ENCODE measurements at regions of chr15 and their contacts with region 1.

Region 1: DNA sequence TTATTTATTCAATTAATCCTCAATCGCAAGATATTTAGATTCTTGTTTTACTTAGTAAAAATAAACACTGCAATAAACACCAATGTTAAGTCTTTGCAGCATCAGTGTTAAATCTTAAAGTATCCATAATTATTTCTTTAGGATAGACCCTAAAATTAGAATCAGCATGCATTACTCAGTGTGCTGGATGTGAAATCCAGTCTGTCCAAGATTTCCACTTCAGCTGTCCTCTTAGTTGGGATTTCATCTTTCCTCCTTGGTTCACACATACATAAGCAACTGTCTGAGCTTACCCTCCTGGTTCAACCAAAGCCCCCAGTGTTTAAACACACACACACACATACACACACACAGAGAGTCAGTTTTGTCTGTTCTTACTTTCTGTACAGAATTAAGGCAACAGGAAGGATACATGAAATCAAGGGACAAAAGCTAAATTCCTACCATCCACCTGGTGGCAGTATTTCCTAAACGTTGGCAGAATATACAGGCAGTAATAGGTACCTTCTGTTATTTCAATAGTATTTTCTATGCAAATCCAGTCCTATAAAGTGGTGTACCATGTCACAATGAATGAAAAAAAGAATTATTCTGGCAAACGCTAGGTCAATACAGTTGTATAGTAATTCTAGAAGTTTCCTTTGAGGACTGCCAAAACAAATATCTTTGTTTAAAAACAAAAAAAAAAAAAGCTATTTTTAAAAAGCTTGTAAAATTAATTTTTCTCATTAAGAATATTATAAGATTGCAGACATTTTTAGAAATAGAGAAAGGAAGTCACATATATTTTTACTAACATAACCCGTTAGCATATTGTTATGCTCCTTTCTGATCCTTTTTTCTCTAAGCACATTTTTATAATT is 27.3 kb upstream of the DMXL2 start:
- DNase-seq: no peak
- ATAC-seq: peak; percentile 68 to 81
- H3K4me3 ChIP-seq: no peak overlapping the region
- H3K27ac ChIP-seq: no peak overlapping the region
- H3K4me1 ChIP-seq: no peaks in the 10 kb centered on the region
- H3K27me3 ChIP-seq: no peaks in the 10 kb centered on the region

Region 2: DNA sequence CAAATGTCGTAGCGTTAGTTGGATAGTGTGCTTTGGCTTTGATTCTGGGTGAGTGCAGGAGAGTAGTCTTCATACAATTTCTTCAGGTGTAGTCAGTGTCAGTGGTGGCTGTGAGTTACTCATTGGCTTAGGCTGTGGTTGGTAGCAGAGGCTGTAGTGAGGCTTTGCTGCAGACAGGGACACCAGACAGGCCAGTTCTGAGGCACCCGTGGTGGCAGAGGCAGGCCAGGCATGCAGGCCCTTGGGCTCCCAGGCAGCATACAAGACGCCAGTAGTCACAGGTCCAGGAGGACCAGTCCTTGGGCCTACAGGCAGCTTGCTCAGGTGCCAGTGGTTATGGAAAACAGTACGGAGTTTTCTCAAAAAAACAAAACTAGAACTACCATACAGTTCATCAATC is 88.6 kb before region 1 on chr15:
- intact Hi-C with region 1: no loop called
- DNase-seq: no peak
- ATAC-seq: no peak
- H3K4me3 ChIP-seq: no peak overlapping the region
- H3K27ac ChIP-seq: no peak overlapping the region
- H3K4me1 ChIP-seq: no peaks in the 10 kb centered on the region
- H3K27me3 ChIP-seq: no peaks in the 10 kb centered on the region

Region 3: GRCh38 chr15:51776952-51777574 is 127.2 kb after region 1 on chr15:
- intact Hi-C with region 1: loop called (anchors 1 to 5 kb)
- DNase-seq: peak in 2 of 3 donors; percentile 52 to 53
- ATAC-seq: peak; percentile 87 to 93
- H3K4me3 ChIP-seq: no peak overlapping the region
- H3K27ac ChIP-seq: no peak overlapping the region
- H3K4me1 ChIP-seq: no peaks in the 10 kb centered on the region
- H3K27me3 ChIP-seq: no peaks in the 10 kb centered on the region

Measured in right cardiac atrium (tissue), 5 donors.